ENCODE measurements at regions of chr7 and their contacts with region 1.

Region 1: GRCh38 chr7:28732071-28732869 is 225.9 kb downstream of the TRIL start:
- DNase-seq: no peak

Region 2: DNA sequence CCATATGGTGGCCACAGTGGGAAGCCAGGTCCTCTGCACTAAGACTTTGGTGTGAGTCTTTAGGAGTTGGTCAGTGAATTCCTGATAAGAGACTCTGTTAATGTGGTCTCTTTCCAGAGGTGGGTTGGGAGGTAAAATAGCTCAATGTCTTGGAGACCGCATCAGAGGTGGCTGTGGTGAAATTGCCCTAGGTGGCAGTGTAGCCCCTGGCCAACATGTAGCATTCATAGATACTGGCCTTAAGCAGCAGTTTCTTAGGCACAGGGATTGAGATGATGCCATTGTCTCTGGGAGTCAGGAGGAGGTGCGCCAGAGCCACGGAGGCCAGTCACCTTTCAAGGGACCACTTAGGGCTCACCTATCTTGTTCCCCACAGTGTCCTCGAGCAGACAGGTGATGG is 117.2 kb before region 1 on chr7:
- intact Hi-C with region 1: no loop called
- DNase-seq: no peak

Region 3: DNA sequence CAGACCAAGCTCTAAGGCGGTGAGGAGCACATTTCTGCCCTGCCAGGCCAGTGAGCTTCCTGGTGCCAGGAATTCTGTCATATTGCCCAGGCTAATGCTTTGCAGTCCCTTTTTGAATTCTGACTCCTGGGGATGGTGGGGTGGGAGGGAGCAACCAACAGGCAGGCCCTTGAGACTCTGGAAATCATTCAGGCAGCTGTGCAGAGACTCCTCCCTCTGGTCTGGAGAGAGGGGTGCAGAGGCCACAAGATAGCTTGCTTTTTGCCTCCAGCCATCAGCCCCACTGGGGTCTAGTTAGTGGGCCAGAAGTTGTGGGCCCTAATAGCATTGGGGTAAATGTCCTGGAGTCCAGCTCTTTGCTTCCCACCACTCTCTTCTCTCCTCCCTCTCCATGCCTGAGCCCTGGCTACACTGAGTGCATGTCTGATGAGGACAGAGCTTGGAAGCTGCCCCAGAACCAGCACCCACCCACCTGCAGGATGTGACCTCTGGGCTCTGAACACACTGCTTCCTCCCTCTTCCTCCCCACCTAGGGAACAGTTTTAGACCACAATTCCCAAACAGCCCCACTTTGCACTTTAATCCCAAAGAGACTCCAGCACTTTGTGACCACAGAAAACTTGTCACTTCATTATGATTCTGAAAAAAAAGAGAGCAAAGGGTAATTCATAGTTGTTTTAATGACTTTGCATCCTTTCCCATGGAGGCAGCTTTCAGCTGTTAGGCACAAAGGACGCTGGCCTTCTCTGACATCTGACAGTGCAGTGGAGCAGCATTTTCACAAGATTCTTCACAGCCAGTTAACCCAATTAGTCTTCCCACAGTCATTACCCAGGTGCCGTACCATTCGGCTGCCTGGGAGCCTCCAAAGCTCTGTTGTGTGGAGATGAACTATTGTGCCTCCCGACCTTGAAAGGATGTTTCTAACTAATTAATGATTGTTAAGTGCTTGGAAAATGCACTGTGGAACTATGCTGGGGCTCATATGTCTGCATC is 36.7 kb before region 1 on chr7:
- intact Hi-C with region 1: loop called (anchors 5 kb)
- DNase-seq: no peak